ENCODE measurements at regions of chr4 and their contacts with region 1.

Region 1: GRCh38 chr4:113761620-113762185 is at the start of gene CAMK2D:
- DNase-seq: peak; percentile 56 to 70
- H3K4me3 ChIP-seq: peak within 1 kb of the TSS; percentile 71
- H3K27ac ChIP-seq: peak within 1 kb of the TSS; percentile 91
- H3K4me1 ChIP-seq: peaks cover 16% of the 10 kb centered on the region
- H3K27me3 ChIP-seq: no peaks in the 10 kb centered on the region
- CTCF ChIP-seq: peak; percentile 38; the same call in 1 of the 2 replicates
- total RNA-seq, gene CAMK2D: 7.1 and 10.5 TPM in 2 replicates

Region 2: GRCh38 chr4:113468165-113469022 is 293.3 kb before region 1 on chr4:
- CTCF ChIA-PET with region 1: no interaction called
- POLR2A ChIA-PET with region 1: no interaction called
- intact Hi-C with region 1: loop called (anchors 2 kb)
- DNase-seq: peak; percentile 60 to 92
- H3K4me3 ChIP-seq: peak overlapping the region; percentile 27; the same call in 1 of the 2 replicates
- H3K27ac ChIP-seq: peak overlapping the region; percentile 80
- H3K4me1 ChIP-seq: peaks cover 25% of the 10 kb centered on the region
- H3K27me3 ChIP-seq: no peaks in the 10 kb centered on the region
- CTCF ChIP-seq: no peak

Region 3: GRCh38 chr4:113547487-113548042 is 214.1 kb before region 1 on chr4:
- CTCF ChIA-PET with region 1: no interaction called
- POLR2A ChIA-PET with region 1: no interaction called
- intact Hi-C with region 1: loop called (anchors 1 kb)
- DNase-seq: peak; percentile 76 to 83
- H3K4me3 ChIP-seq: no peak overlapping the region
- H3K27ac ChIP-seq: no peak overlapping the region
- H3K4me1 ChIP-seq: peaks cover 10% of the 10 kb centered on the region
- H3K27me3 ChIP-seq: no peaks in the 10 kb centered on the region
- CTCF ChIP-seq: peak; percentile 83

Region 4: GRCh38 chr4:113636438-113636818 is 125.3 kb before region 1 on chr4:
- CTCF ChIA-PET with region 1: no interaction called
- POLR2A ChIA-PET with region 1: no interaction called
- intact Hi-C with region 1: loop called (anchors 2 kb)
- DNase-seq: no peak
- H3K4me3 ChIP-seq: no peak overlapping the region
- H3K27ac ChIP-seq: no peak overlapping the region
- H3K4me1 ChIP-seq: peaks cover 10% of the 10 kb centered on the region
- H3K27me3 ChIP-seq: no peaks in the 10 kb centered on the region; the same call in 1 of the 2 replicates
- CTCF ChIP-seq: no peak

Region 5: DNA sequence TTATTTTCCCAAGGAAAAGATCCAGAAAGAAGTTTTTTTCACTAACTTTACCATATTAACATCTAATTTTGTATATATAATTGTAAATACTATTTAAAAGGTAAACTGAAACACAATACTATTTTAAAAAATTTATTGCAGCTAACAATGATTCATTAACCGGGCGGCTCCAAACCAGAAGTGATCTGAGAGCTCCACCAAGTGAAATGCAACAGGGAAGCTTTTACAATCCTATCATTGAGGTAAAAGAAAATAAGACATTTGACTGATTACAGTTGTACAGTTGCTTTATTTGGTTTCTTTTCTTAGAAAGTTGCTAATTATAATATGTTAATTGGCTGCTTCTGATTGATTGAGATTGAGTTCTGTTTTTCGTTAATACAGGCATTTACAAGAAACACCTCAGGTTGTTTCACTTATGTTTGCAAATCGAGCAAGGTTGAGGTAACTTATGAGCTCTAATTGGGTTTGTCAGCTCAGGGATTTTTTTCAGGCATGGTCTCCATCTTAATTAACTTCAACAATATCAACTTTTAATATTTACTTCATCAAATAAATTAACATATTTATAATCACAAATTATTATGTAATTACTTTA is 616.7 kb after region 1 on chr4:
- CTCF ChIA-PET with region 1: no interaction called
- POLR2A ChIA-PET with region 1: no interaction called
- intact Hi-C with region 1: loop called (anchors 5 kb)
- DNase-seq: peak in 1 of 2 experiments; percentile 5
- H3K4me3 ChIP-seq: no peak overlapping the region
- H3K27ac ChIP-seq: no peak overlapping the region
- H3K4me1 ChIP-seq: no peaks in the 10 kb centered on the region
- H3K27me3 ChIP-seq: no peaks in the 10 kb centered on the region
- CTCF ChIP-seq: no peak